GM10248 (cell line): ENCODE measurements at regions of chr15 and their contacts with region 1.

Region 1: GRCh38 chr15:90931737-90932659 is at the start of gene HDDC3:
- DNase-seq: peak; percentile 90
- CTCF ChIP-seq: peak; percentile 98

Region 2: GRCh38 chr15:89740137-89740536 is 1191.9 kb before region 1 on chr15:
- CTCF ChIA-PET with region 1: no interaction called
- POLR2A ChIA-PET with region 1: no interaction called
- DNase-seq: peak; percentile 81
- CTCF ChIP-seq: peak; percentile 79

Region 3: DNA sequence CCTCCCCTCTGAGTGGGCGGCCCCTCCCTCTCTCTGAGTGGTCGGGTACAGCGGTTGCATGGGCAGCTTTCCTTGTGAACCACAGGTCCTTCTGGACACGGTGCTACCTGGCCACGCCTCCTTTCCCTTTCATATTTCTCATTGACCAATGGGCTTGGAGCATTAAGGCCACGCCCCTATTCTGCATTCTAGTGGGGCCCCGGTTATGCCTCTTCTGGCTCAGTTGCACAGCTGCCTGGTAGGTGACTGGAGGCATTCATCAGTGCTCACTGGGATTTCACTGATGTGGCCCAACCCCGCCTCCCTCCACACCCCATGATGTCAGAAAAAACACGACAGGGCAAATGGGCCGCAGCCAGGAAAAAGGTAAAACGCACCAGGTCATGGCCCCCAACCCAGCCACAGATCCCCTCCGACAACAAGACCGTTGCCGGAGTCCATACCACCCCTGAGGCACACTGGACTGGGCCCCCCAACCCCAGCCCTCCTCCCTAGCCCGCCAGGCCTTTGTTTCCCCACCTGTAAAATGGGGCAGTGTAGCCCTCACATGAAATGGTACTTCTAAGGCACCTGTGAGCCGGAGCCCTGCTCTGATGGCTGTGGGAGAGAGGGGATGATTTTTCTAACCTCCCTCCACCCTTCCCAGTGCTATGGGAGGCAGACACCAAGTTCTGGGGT is 640.2 kb before region 1 on chr15:
- CTCF ChIA-PET with region 1: interaction called, 23 read pairs
- POLR2A ChIA-PET with region 1: no interaction called
- DNase-seq: peak; percentile 32
- CTCF ChIP-seq: no peak

Region 4: GRCh38 chr15:90762109-90762508 is 169.9 kb before region 1 on chr15:
- CTCF ChIA-PET with region 1: no interaction called
- POLR2A ChIA-PET with region 1: no interaction called
- DNase-seq: no peak
- CTCF ChIP-seq: no peak

Region 5: DNA sequence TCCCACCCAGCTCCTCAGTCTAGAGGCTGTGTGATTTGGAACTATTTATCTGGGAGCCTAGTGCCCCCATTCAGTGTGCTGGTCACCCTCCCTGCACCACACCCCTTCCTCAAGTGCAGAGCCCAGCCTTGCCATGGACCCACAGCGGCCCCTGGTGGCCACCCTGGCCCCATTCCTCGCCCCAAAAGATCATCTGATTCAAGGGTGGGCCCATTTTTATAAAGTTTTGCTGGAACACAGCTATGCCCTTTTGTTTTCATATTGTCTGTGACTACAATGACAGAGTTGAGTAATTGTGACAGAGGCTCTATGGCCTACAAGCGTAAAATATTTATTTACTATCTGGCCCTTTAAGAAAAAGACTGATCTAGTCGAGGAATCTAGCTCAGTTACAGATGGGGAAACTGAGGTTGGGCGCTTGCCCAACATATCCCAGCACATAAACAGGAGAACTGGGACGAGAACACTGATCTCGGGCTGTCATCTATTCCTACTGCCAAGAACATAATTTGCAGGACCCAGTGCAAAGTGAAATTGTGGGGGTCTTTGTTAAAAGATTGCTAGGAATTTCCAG is 45.9 kb before region 1 on chr15:
- CTCF ChIA-PET with region 1: interaction called, 68 read pairs
- POLR2A ChIA-PET with region 1: no interaction called
- DNase-seq: peak; percentile 80
- CTCF ChIP-seq: peak; percentile 90

Region 6: GRCh38 chr15:90915808-90916440 is 16.1 kb before region 1 on chr15:
- CTCF ChIA-PET with region 1: interaction called, 113 read pairs
- POLR2A ChIA-PET with region 1: no interaction called
- DNase-seq: no peak
- CTCF ChIP-seq: no peak

Region 7: GRCh38 chr15:90982135-90982534 is 50.1 kb after region 1 on chr15:
- CTCF ChIA-PET with region 1: interaction called, 18 read pairs
- POLR2A ChIA-PET with region 1: no interaction called
- DNase-seq: no peak
- CTCF ChIP-seq: no peak

Region 8: GRCh38 chr15:91055548-91056331 is 123.7 kb after region 1 on chr15:
- CTCF ChIA-PET with region 1: interaction called, 20 read pairs
- POLR2A ChIA-PET with region 1: no interaction called
- DNase-seq: peak; percentile 64
- CTCF ChIP-seq: peak; percentile 77